ENCODE measurements at regions of chr5 and their contacts with region 1.

Region 1: GRCh38 chr5:110258460-110259216 is 467.8 kb downstream of the TMEM232 start:
- DNase-seq: no peak
- H3K4me3 Mint-ChIP-seq: no peak overlapping the region
- H3K27ac Mint-ChIP-seq: no peak overlapping the region
- H3K4me1 Mint-ChIP-seq: no peaks in the 10 kb centered on the region
- H3K27me3 Mint-ChIP-seq: no peaks in the 10 kb centered on the region

Region 2: GRCh38 chr5:109830955-109831502 is 427.6 kb before region 1 on chr5:
- CTCF ChIA-PET with region 1: no interaction called
- POLR2A ChIA-PET with region 1: no interaction called
- intact Hi-C with region 1: no loop called
- DNase-seq: no peak
- H3K4me3 Mint-ChIP-seq: no peak overlapping the region
- H3K27ac Mint-ChIP-seq: no peak overlapping the region
- H3K4me1 Mint-ChIP-seq: peaks cover 5% of the 10 kb centered on the region
- H3K27me3 Mint-ChIP-seq: no peaks in the 10 kb centered on the region

Region 3: DNA sequence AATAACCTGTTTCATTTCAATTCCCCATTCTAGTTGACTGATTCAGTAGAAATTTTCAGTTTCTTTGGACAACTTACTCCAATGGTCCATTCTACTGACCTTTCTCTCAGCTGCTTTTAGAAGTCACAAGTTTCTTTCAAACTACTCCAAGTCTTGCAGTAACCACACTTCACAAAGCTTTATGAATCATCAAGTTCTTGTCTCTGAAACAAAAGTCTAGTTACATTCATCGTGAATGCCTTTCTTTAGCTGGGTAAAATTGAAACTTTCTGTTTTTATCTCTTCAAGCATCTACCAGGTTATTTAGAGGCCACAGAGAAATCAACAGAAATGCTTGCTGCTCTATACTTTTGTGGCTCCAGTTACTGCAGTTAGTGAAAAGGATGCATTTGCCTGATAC is 62.5 kb after region 1 on chr5:
- CTCF ChIA-PET with region 1: no interaction called
- POLR2A ChIA-PET with region 1: no interaction called
- intact Hi-C with region 1: loop called (anchors 5 kb)
- DNase-seq: no peak
- H3K4me3 Mint-ChIP-seq: no peak overlapping the region
- H3K27ac Mint-ChIP-seq: no peak overlapping the region
- H3K4me1 Mint-ChIP-seq: no peaks in the 10 kb centered on the region
- H3K27me3 Mint-ChIP-seq: no peaks in the 10 kb centered on the region

Measured in activated CD4-positive, alpha-beta memory T cell treated with anti-CD3 and anti-CD28 coated beads for 36 hours (primary cell).